B cell (primary cell): ENCODE measurements at regions of chrX and their contacts with region 1.

Region 1: GRCh38 chrX:24395775-24396174 is 35.3 kb downstream of the SUPT20HL1 start:
- DNase-seq: peak; percentile 74
- ATAC-seq: peak; percentile 63
- H3K4me3 ChIP-seq: no peak overlapping the region
- H3K4me3 Mint-ChIP-seq: no peak overlapping the region
- H3K27ac ChIP-seq: no peak overlapping the region
- H3K27ac Mint-ChIP-seq: no peak overlapping the region
- H3K4me1 ChIP-seq: no peaks in the 10 kb centered on the region
- H3K4me1 Mint-ChIP-seq: peaks cover 2% of the 10 kb centered on the region
- H3K27me3 ChIP-seq: peaks cover 0 to 4% (median 1%) of the 10 kb centered on the region in 4 experiments
- H3K27me3 Mint-ChIP-seq: peaks cover 10% of the 10 kb centered on the region
- CTCF ChIP-seq: peak; percentile 76

Region 2: DNA sequence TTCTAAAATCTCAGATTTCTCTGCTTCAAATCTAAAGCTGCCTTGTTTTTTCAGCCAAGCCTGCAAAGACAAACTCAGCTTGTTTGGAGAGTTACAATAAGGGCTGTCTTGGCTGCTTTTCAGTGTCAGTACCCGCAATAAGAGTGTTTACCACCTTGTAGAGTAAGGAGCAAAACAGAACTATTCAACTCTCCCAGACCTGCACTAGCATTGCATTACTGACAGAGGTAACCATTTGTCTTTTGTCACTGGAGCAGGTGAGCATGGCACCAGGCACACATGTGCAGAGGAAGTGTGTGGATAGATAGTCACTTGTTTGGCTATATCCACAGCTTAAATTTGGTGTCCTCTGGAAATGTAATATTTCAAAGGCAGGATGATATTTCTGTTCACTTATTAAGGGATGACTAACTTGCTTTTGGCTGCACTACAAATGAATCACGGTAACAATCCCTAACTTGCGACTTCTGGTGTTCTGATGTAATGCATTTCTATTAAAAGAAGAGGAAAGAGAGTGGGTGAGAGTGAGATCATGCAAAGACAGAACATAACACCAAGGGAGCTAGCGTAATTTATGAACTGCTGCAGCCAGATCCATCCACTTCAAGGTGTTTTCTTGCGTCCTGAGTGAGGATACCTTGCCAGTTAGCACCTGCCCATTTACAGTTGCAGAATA is 1022.5 kb before region 1 on chrX:
- CTCF ChIA-PET with region 1: no interaction called
- POLR2A ChIA-PET with region 1: no interaction called
- intact Hi-C with region 1: no loop called
- DNase-seq: no peak
- ATAC-seq: no peak
- H3K4me3 ChIP-seq: no peak overlapping the region
- H3K4me3 Mint-ChIP-seq: no peak overlapping the region
- H3K27ac ChIP-seq: no peak overlapping the region
- H3K27ac Mint-ChIP-seq: no peak overlapping the region
- H3K4me1 ChIP-seq: no peaks in the 10 kb centered on the region
- H3K4me1 Mint-ChIP-seq: no peaks in the 10 kb centered on the region
- H3K27me3 ChIP-seq: no peaks in the 10 kb centered on the region
- H3K27me3 Mint-ChIP-seq: no peaks in the 10 kb centered on the region
- CTCF ChIP-seq: no peak

Region 3: GRCh38 chrX:24298191-24298590 is 97.6 kb before region 1 on chrX:
- CTCF ChIA-PET with region 1: no interaction called
- POLR2A ChIA-PET with region 1: no interaction called
- intact Hi-C with region 1: no loop called
- DNase-seq: no peak
- ATAC-seq: no peak
- H3K4me3 ChIP-seq: no peak overlapping the region
- H3K4me3 Mint-ChIP-seq: no peak overlapping the region
- H3K27ac ChIP-seq: no peak overlapping the region
- H3K27ac Mint-ChIP-seq: no peak overlapping the region
- H3K4me1 ChIP-seq: no peaks in the 10 kb centered on the region
- H3K4me1 Mint-ChIP-seq: no peaks in the 10 kb centered on the region
- H3K27me3 ChIP-seq: peaks cover 0 to 2% (median 0%) of the 10 kb centered on the region in 4 experiments
- H3K27me3 Mint-ChIP-seq: peaks cover 3% of the 10 kb centered on the region
- CTCF ChIP-seq: no peak

Region 4: DNA sequence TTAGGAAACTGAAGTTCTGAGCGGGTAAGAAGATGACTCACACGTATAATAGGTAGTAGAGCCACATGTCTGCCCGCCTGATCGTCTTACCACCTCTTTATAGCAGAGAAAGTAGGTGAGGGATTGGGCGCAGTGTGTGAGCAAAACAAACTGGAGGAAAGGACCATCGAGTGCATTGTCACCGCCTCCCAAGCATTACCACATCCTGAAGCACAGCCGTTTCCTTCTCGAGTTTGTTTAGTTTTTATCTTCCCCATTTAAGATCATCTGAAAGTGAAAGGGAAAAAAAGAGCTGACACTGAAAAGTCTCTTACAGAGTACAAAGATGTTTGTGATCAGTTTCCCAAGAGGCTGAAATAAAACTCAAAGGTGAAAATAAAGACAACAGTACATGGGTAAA is 84.1 kb after region 1 on chrX:
- CTCF ChIA-PET with region 1: interaction called, 4 read pairs
- POLR2A ChIA-PET with region 1: no interaction called
- intact Hi-C with region 1: loop called (anchors 5 kb)
- DNase-seq: peak; percentile 89
- ATAC-seq: peak; percentile 96
- H3K4me3 ChIP-seq: peak overlapping the region; percentile 31 to 62 (median 42)
- H3K4me3 Mint-ChIP-seq: peak overlapping the region; percentile 92
- H3K27ac ChIP-seq: peak overlapping the region; percentile 93 to 96
- H3K27ac Mint-ChIP-seq: peak overlapping the region; percentile 99
- H3K4me1 ChIP-seq: peaks cover 33 to 49% of the 10 kb centered on the region in 2 donors
- H3K4me1 Mint-ChIP-seq: peaks cover 62% of the 10 kb centered on the region
- H3K27me3 ChIP-seq: no peaks in the 10 kb centered on the region
- H3K27me3 Mint-ChIP-seq: no peaks in the 10 kb centered on the region
- CTCF ChIP-seq: no peak

Region 5: GRCh38 chrX:24498975-24499374 is 103.2 kb after region 1 on chrX:
- CTCF ChIA-PET with region 1: interaction called, 255 read pairs
- POLR2A ChIA-PET with region 1: interaction called, 6 read pairs
- intact Hi-C with region 1: loop called (anchors 1 kb)
- DNase-seq: peak; percentile 56
- ATAC-seq: peak; percentile 56
- H3K4me3 ChIP-seq: no peak overlapping the region
- H3K4me3 Mint-ChIP-seq: no peak overlapping the region
- H3K27ac ChIP-seq: peak overlapping the region in 1 of 2 donors; percentile 37
- H3K27ac Mint-ChIP-seq: no peak overlapping the region
- H3K4me1 ChIP-seq: peaks cover 3 to 6% of the 10 kb centered on the region in 2 donors
- H3K4me1 Mint-ChIP-seq: peaks cover 18% of the 10 kb centered on the region
- H3K27me3 ChIP-seq: no peaks in the 10 kb centered on the region
- H3K27me3 Mint-ChIP-seq: no peaks in the 10 kb centered on the region
- CTCF ChIP-seq: peak; percentile 66

Region 6: DNA sequence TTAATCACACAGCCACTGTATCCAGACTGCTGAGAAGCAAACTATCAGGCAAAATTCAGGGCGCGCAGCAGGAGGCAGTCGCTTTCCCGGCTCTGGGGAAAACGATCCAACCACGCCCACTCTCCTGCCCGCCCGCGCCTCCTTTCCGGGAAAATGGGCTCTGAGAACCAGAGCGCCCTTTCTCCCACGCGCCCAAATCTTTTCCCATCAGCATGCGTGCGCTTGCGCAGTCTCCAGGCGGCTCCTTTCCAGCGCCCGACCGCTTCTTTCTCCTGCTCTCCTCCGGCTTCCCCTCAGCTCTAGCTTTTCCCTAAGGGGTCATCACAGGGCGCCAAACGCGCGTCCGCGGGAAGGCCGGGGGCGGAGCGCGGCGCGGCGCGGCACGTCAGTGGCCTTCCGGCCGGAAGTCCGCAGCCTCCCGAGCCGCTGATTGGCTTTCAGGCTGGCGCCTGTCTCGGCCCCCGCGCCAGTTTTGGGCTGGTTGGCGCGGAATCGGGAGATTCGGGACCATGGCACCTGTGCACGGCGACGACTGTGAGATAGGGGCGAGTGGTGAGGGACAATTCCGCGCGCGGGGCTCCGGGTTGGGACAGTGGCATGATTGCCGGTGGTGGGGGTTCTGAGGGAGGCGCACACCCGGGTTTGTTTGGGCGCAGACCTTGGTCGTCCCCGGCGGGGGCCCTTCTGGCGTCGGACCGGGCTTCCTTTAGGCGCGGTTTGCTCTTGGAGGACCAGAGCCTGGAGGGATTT is 297.9 kb after region 1 on chrX and contains the start of gene POLA1:
- CTCF ChIA-PET with region 1: no interaction called
- POLR2A ChIA-PET with region 1: no interaction called
- intact Hi-C with region 1: loop called (anchors 2 kb)
- DNase-seq: peak; percentile 76
- ATAC-seq: peak; percentile 92
- H3K4me3 ChIP-seq: peak within 1 kb of the TSS; percentile 44 to 73 (median 67)
- H3K4me3 Mint-ChIP-seq: peak within 1 kb of the TSS; percentile 91
- H3K27ac ChIP-seq: peak within 1 kb of the TSS; percentile 38 to 73
- H3K27ac Mint-ChIP-seq: peak within 1 kb of the TSS; percentile 80
- H3K4me1 ChIP-seq: peaks cover 7 to 9% of the 10 kb centered on the region in 2 donors
- H3K4me1 Mint-ChIP-seq: peaks cover 17% of the 10 kb centered on the region
- H3K27me3 ChIP-seq: no peaks in the 10 kb centered on the region
- H3K27me3 Mint-ChIP-seq: no peaks in the 10 kb centered on the region
- CTCF ChIP-seq: no peak
- total RNA-seq, gene POLA1: 16.2 and 16.3 TPM in 2 replicates